CD4-positive, alpha-beta memory T cell (primary cell): ENCODE measurements at regions of chr9 and their contacts with region 1.

Region 1: GRCh38 chr9:103867886-103868285 is 226.2 kb upstream of the SMC2 start:
- DNase-seq: no peak
- H3K4me3 ChIP-seq: no peak overlapping the region
- H3K4me3 Mint-ChIP-seq: no peak overlapping the region
- H3K27ac ChIP-seq: no peak overlapping the region
- H3K27ac Mint-ChIP-seq: no peak overlapping the region
- H3K4me1 ChIP-seq: no peaks in the 10 kb centered on the region
- H3K4me1 Mint-ChIP-seq: no peaks in the 10 kb centered on the region
- H3K27me3 ChIP-seq: no peaks in the 10 kb centered on the region
- H3K27me3 Mint-ChIP-seq: no peaks in the 10 kb centered on the region

Region 2: GRCh38 chr9:103928442-103928841 is 60.6 kb after region 1 on chr9:
- CTCF ChIA-PET with region 1: no interaction called
- POLR2A ChIA-PET with region 1: no interaction called
- intact Hi-C with region 1: loop called (anchors 10 kb)
- DNase-seq: no peak
- H3K4me3 ChIP-seq: no peak overlapping the region
- H3K4me3 Mint-ChIP-seq: no peak overlapping the region
- H3K27ac ChIP-seq: no peak overlapping the region
- H3K27ac Mint-ChIP-seq: no peak overlapping the region
- H3K4me1 ChIP-seq: no peaks in the 10 kb centered on the region
- H3K4me1 Mint-ChIP-seq: peaks cover 0 to 1% (median 0%) of the 10 kb centered on the region in 4 donors
- H3K27me3 ChIP-seq: no peaks in the 10 kb centered on the region
- H3K27me3 Mint-ChIP-seq: peaks cover 0 to 1% of the 10 kb centered on the region in 2 donors